A673 (cell line): ENCODE measurements at regions of chr7 and their contacts with region 1.

Region 1: GRCh38 chr7:25894902-25895791 is 256.9 kb upstream of the NFE2L3 start:
- DNase-seq: peak; percentile 84
- H3K4me3 ChIP-seq: peak overlapping the region; percentile 20
- H3K27ac ChIP-seq: no peak overlapping the region
- H3K4me1 ChIP-seq: peaks cover 22% of the 10 kb centered on the region
- H3K27me3 ChIP-seq: no peaks in the 10 kb centered on the region
- CTCF ChIP-seq: peak; percentile 88

Region 2: GRCh38 chr7:25259587-25260243 is 635.4 kb before region 1 on chr7:
- CTCF ChIA-PET with region 1: no interaction called
- POLR2A ChIA-PET with region 1: no interaction called
- intact Hi-C with region 1: no loop called
- DNase-seq: peak; percentile 88
- H3K4me3 ChIP-seq: no peak overlapping the region
- H3K27ac ChIP-seq: no peak overlapping the region
- H3K4me1 ChIP-seq: peaks cover 22% of the 10 kb centered on the region
- H3K27me3 ChIP-seq: peaks cover 9% of the 10 kb centered on the region
- CTCF ChIP-seq: peak; percentile 90

Region 3: DNA sequence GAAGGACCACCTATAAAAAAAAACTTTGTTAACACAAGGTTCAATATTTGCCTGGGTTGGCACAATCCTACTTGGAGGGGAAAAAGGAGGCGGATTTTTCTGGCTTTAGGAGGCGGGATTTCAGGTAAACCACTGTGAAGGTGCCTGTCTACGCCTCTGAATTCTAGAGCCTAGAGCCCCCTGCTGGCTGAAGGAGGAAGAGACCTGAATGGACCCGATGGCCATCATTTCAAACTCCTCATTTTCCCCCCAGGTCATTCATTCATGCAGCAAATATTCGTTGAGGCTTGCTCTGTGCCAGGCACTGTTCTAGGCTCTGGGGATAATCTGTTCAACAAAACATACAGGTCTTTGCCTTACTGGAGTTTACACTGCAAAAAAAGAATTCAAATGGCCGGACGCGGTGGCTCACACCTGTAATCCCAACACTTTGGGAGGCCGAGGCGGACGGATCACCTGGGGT is 166.6 kb after region 1 on chr7:
- CTCF ChIA-PET with region 1: no interaction called
- POLR2A ChIA-PET with region 1: no interaction called
- intact Hi-C with region 1: loop called (anchors 1 kb)
- DNase-seq: peak; percentile 78
- H3K4me3 ChIP-seq: no peak overlapping the region
- H3K27ac ChIP-seq: no peak overlapping the region
- H3K4me1 ChIP-seq: peaks cover 25% of the 10 kb centered on the region
- H3K27me3 ChIP-seq: no peaks in the 10 kb centered on the region
- CTCF ChIP-seq: peak; percentile 92

Region 4: GRCh38 chr7:26200444-26201246 is 305.5 kb after region 1 on chr7 and contains the start of gene HNRNPA2B1:
- CTCF ChIA-PET with region 1: no interaction called
- POLR2A ChIA-PET with region 1: no interaction called
- intact Hi-C with region 1: loop called (anchors 5 kb)
- DNase-seq: peak; percentile 98
- H3K4me3 ChIP-seq: peak within 1 kb of the TSS; percentile 91
- H3K27ac ChIP-seq: peak within 1 kb of the TSS; percentile 100
- H3K4me1 ChIP-seq: peaks cover 24% of the 10 kb centered on the region
- H3K27me3 ChIP-seq: no peaks in the 10 kb centered on the region
- CTCF ChIP-seq: 0 out of 2 replicates have a peak, but pooled peaks have one; percentile 18
- total RNA-seq, gene HNRNPA2B1: 1,150 and 1,229 TPM in 2 replicates

Region 5: DNA sequence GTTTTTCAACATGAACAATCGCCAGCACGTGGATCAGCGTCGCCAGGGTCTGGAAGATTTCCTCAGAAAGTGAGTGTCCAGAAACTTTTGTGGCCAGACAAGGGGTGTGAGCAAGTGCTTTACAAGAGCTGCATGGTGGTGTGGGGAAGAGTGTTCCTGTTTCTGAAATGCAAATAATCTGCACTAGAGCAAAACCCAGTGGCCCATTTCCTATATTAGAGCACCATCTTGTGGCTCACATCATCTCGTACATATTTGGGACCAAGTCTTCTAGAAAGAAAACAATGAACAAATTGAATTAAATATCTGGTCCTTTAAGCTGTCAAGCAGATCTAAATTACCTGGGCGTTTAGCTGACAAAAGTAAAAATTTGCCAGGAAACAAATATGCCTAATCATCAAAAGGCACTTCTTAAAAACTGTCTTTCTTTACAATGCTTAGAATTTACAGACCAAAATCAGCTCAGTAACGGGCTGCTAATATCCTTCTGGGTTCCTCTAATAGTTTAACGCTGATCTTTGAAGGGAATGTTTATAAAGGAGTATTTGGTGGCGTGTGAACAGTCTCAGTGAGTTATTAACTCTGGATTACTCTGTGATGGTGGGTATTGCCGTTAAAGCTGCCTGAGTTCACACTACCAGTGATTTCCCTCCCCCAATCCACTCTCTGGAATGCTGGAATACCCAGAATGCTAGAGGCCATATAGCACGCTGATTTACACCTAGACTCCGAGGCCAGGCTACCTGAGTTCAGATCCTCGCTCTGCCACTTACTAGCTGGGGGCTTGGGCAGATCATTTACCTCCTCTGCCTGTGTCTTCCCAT is 470.1 kb after region 1 on chr7:
- CTCF ChIA-PET with region 1: interaction called, 12 read pairs
- POLR2A ChIA-PET with region 1: no interaction called
- intact Hi-C with region 1: loop called (anchors 1 kb)
- DNase-seq: peak; percentile 81
- H3K4me3 ChIP-seq: no peak overlapping the region
- H3K27ac ChIP-seq: no peak overlapping the region
- H3K4me1 ChIP-seq: peaks cover 2% of the 10 kb centered on the region
- H3K27me3 ChIP-seq: peaks cover 10% of the 10 kb centered on the region
- CTCF ChIP-seq: peak; percentile 72

Region 6: DNA sequence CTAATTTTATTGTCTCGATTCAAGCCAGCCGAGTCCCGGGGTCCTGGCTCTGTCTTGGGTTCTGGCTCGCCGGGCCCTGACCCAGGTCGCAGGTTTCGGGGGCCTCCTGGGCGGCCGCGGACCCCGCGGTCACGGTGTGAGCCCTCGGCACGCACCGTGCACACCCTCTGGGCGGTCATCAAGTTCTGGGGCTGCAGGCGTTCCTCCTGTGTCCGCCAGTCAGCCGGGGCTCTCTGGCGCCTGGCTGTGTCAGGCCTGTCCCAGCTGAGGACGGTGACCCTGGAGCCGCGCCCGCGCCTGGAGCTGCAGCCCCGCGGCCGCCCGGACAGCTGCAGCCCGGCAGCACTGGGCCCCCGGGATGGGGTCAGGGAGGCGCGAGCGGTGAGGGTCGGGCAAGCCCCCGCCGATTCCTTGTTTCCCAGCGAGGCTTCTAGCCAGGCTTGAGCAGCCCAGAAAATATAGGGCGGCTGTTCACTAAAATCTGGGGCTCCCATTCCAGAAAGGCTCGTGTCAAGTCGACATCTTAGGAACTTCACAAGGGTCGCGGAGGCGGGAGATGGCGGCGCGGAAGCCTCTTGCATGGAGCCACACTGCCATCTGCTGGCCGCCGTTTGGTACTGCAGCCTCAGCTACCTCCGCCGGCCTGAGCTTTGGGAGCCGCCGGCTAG is 1265.5 kb after region 1 on chr7:
- CTCF ChIA-PET with region 1: no interaction called
- POLR2A ChIA-PET with region 1: no interaction called
- intact Hi-C with region 1: loop called (anchors 10 kb)
- DNase-seq: peak; percentile 87
- H3K4me3 ChIP-seq: peak overlapping the region; percentile 50
- H3K27ac ChIP-seq: no peak overlapping the region
- H3K4me1 ChIP-seq: peaks cover 4% of the 10 kb centered on the region
- H3K27me3 ChIP-seq: peaks cover 61% of the 10 kb centered on the region
- CTCF ChIP-seq: peak; percentile 96